ENCODE measurements at regions of chr10 and their contacts with region 1.

Region 1: GRCh38 chr10:102917962-102918816 is at the start of gene CNNM2:
- DNase-seq: peak; percentile 100
- H3K4me3 ChIP-seq: peak within 1 kb of the TSS; percentile 84 to 91
- H3K4me3 Mint-ChIP-seq: peak within 1 kb of the TSS; percentile 94 to 96 (median 95)
- H3K27ac ChIP-seq: peak within 1 kb of the TSS; percentile 72
- H3K27ac Mint-ChIP-seq: peak within 1 kb of the TSS; percentile 92 to 98 (median 96)
- H3K4me1 ChIP-seq: peaks cover 53% of the 10 kb centered on the region
- H3K4me1 Mint-ChIP-seq: peaks cover 35 to 59% (median 51%) of the 10 kb centered on the region in 4 donors
- H3K27me3 ChIP-seq: no peaks in the 10 kb centered on the region
- H3K27me3 Mint-ChIP-seq: peaks cover 4 to 6% of the 10 kb centered on the region in 2 donors
- total RNA-seq, gene CNNM2: 11.9 to 14.4 TPM

Region 2: DNA sequence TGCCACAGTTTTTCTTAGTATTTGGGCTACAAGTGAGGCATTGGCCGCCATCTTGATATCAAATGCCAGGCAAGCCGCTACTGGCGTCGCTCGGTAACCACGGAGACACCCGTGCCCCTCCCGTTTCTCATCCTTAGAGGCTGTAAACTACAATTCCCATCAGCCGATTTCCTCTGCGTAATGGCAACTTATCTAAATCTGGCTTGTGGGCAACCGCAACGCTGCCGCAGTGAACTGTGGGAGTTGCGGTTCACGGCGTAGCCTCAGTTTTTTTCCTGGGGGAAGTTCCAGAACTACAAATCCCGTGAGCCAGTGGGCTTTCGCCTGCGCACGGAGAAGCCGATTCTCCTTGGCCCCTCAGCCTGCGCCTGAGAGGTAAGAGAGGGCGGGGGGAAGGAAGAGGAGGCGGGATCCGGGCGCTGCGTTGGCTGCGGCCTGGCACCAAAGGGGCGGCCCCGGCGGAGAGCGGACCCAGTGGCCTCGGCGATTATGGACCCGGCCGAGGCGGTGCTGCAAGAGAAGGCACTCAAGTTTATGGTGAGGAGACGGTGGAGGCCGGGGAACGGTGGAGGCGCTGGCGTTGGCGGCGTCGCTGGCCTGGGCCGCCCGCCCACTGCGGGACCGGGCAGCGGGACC is 1564.4 kb before region 1 on chr10 and contains the start of gene BTRC:
- CTCF ChIA-PET with region 1: no interaction called
- POLR2A ChIA-PET with region 1: no interaction called
- intact Hi-C with region 1: loop called (anchors 5 kb)
- DNase-seq: peak; percentile 98 to 99 (median 98)
- H3K4me3 ChIP-seq: peak within 1 kb of the TSS; percentile 79 to 89
- H3K4me3 Mint-ChIP-seq: peak within 1 kb of the TSS; percentile 95 to 99 (median 98)
- H3K27ac ChIP-seq: peak within 1 kb of the TSS; percentile 85
- H3K27ac Mint-ChIP-seq: peak within 1 kb of the TSS; percentile 97 to 99 (median 98)
- H3K4me1 ChIP-seq: peaks cover 22% of the 10 kb centered on the region
- H3K4me1 Mint-ChIP-seq: peaks cover 16 to 35% (median 26%) of the 10 kb centered on the region in 4 donors
- H3K27me3 ChIP-seq: no peaks in the 10 kb centered on the region
- H3K27me3 Mint-ChIP-seq: peaks cover 8 to 13% of the 10 kb centered on the region in 2 donors
- total RNA-seq, gene BTRC: 18.7 to 21.3 TPM

Region 3: DNA sequence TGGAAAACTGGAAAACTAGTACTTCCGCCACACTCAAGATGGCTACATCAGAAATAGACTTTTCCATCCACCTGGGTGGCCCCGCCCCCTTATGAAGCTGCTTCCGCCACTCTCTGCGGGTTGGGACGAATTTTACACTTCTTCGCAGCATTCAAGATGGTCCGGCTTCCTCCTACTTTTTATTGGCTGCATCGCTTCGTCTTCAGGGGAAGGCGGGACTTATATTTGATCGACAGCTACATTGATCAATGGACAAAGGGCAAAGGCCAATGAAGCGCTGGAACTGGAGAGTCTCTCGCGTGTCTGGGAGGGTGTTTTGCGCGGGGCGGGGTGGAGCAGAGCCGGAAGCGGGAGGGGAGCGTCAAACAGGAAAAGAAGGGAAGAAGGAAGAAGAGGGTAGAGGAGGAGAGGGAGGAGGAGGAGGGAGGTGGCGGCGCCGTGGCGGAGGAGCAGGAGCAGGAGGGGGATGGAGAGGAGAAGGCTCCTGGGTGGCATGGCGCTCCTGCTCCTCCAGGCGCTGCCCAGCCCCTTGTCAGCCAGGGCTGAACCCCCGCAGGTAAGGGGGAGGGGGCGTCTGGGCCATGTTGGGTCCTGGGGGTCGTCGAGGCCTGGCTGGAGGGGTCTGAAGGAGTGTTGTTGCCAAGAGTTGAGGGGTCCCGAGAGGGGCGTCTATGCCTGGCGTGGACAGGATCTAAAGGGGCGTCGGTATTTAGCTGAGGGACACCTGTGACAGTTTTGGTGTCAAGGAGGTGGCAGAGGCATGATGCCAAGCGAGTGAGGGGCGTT is 174.4 kb before region 1 on chr10 and contains the start of gene WBP1L:
- CTCF ChIA-PET with region 1: interaction called, 3 read pairs
- POLR2A ChIA-PET with region 1: interaction called, 8 read pairs
- intact Hi-C with region 1: loop called (anchors 1 kb)
- DNase-seq: peak; percentile 95 to 98 (median 97)
- H3K4me3 ChIP-seq: peak within 1 kb of the TSS; percentile 79 to 96
- H3K4me3 Mint-ChIP-seq: peak within 1 kb of the TSS; percentile 90 to 99 (median 96)
- H3K27ac ChIP-seq: peak within 1 kb of the TSS; percentile 81
- H3K27ac Mint-ChIP-seq: peak within 1 kb of the TSS; percentile 69 to 99 (median 94)
- H3K4me1 ChIP-seq: peaks cover 35% of the 10 kb centered on the region
- H3K4me1 Mint-ChIP-seq: peaks cover 33 to 50% (median 42%) of the 10 kb centered on the region in 4 donors
- H3K27me3 ChIP-seq: no peaks in the 10 kb centered on the region
- H3K27me3 Mint-ChIP-seq: no peaks in the 10 kb centered on the region
- total RNA-seq, gene WBP1L: 39.3 to 41.1 TPM

Region 4: DNA sequence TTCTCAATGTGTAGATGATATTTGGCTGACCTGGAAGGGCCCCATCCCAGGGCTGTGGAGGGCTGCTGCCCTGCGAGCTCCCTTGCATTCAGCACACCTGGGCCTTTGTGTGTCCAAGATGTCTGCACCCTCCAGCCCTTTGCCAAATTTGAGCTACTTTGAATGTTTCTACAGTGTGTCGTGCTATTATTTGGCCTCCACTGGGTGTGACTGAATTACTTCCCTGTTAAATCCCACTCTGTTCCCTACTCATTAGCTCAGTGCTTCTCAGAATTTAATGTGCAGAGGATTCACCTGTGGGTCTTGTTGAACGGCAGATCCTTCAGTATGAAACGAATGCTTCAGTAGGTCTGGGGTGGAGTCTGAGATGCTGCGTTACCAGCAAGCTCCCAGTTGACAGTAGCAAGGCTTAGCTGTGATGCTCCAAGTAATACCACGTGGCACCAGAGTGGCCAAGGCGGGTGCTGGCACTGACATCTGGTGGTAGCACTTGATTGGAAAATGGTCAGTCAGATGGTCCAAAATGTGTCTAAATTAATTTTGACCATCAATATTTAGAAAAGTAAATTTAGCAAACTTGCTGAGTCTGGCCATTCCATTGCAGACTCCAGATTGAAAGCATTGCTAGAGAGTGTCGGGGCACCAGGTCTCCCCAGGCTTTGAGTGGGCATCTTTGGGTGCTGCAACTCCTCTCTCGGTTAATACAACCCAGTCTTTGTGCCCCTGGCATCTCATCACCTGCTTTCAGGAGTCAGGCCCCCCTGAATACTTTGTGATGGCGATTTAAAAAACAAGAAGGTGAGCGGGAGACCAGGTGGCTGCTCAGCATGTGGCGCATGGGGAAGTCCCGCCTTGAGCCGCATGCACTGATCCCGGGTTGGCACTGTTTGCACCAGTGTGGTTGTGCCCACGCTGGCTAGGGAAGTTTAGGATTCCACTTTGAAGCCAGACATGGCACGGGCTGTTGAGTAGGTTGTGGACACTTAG is 144.7 kb after region 1 on chr10:
- CTCF ChIA-PET with region 1: interaction called, 61 read pairs
- POLR2A ChIA-PET with region 1: interaction called, 21 read pairs
- intact Hi-C with region 1: no loop called
- DNase-seq: no peak
- H3K4me3 ChIP-seq: no peak overlapping the region
- H3K4me3 Mint-ChIP-seq: no peak overlapping the region
- H3K27ac ChIP-seq: no peak overlapping the region
- H3K27ac Mint-ChIP-seq: no peak overlapping the region
- H3K4me1 ChIP-seq: no peaks in the 10 kb centered on the region
- H3K4me1 Mint-ChIP-seq: no peaks in the 10 kb centered on the region
- H3K27me3 ChIP-seq: no peaks in the 10 kb centered on the region
- H3K27me3 Mint-ChIP-seq: no peaks in the 10 kb centered on the region

Region 5: GRCh38 chr10:103244663-103245271 is 326.6 kb after region 1 on chr10:
- CTCF ChIA-PET with region 1: interaction called, 52 read pairs
- POLR2A ChIA-PET with region 1: interaction called, 7 read pairs
- intact Hi-C with region 1: no loop called
- DNase-seq: peak; percentile 48 to 58 (median 52)
- H3K4me3 ChIP-seq: no peak overlapping the region
- H3K4me3 Mint-ChIP-seq: no peak overlapping the region
- H3K27ac ChIP-seq: no peak overlapping the region
- H3K27ac Mint-ChIP-seq: peak overlapping the region in 1 of 7 donors; percentile 46
- H3K4me1 ChIP-seq: no peaks in the 10 kb centered on the region
- H3K4me1 Mint-ChIP-seq: peaks cover 5 to 11% (median 7%) of the 10 kb centered on the region in 4 donors
- H3K27me3 ChIP-seq: no peaks in the 10 kb centered on the region
- H3K27me3 Mint-ChIP-seq: peaks cover 4 to 6% of the 10 kb centered on the region in 2 donors

Region 6: GRCh38 chr10:104121520-104122224 is 1203.5 kb after region 1 on chr10 and contains the start of gene SFR1:
- CTCF ChIA-PET with region 1: no interaction called
- POLR2A ChIA-PET with region 1: no interaction called
- intact Hi-C with region 1: loop called (anchors 5 kb)
- DNase-seq: peak; percentile 99 to 100 (median 99)
- H3K4me3 ChIP-seq: peak within 1 kb of the TSS; percentile 80 to 98
- H3K4me3 Mint-ChIP-seq: peak within 1 kb of the TSS; percentile 94 to 98 (median 96)
- H3K27ac ChIP-seq: peak within 1 kb of the TSS; percentile 100
- H3K27ac Mint-ChIP-seq: peak within 1 kb of the TSS; percentile 99 to 100 (median 100)
- H3K4me1 ChIP-seq: peaks cover 21% of the 10 kb centered on the region
- H3K4me1 Mint-ChIP-seq: peaks cover 9 to 40% (median 20%) of the 10 kb centered on the region in 4 donors
- H3K27me3 ChIP-seq: no peaks in the 10 kb centered on the region
- H3K27me3 Mint-ChIP-seq: peaks cover 0 to 4% of the 10 kb centered on the region in 2 donors
- total RNA-seq, gene SFR1: 12.2 to 12.4 TPM